SK-N-SH (cell line): ENCODE measurements at regions of chr1 and their contacts with region 1.

Region 1: DNA sequence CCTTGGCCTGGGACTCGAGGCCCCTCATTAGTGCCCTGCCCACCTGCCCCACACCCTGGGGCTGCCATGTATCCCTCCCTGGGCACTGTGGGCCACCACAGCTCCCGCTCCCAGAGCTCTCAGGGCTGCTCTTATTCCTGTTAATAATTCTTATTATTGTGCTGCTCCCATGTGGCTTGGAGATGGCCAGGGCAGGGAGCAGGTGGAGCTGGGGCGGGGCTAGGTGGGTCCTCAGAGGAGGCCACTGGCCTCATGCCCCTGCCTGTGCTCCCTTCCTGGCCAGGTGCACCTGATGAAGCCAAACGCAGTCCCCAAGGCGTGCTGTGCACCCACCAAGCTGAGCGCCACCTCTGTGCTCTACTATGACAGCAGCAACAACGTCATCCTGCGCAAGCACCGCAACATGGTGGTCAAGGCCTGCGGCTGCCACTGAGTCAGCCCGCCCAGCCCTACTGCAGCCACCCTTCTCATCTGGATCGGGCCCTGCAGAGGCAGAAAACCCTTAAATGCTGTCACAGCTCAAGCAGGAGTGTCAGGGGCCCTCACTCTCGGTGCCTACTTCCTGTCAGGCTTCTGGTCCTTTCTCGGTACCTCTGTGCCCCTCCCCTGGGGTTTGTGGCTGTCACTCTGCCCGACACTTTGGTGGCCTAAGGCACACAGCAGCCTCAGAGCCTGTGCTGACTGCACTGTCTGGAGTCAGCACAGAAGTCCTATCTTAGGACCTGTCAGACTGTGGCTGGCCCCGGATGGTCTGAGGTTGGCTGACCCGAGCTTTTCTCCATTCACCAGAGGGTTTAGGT is 34.1 kb downstream of the BMP8A start:
- DNase-seq: no peak
- H3K4me3 ChIP-seq: no peak overlapping the region
- H3K27ac ChIP-seq: no peak overlapping the region
- H3K4me1 ChIP-seq: no peaks in the 10 kb centered on the region
- H3K27me3 ChIP-seq: no peaks in the 10 kb centered on the region
- CTCF ChIP-seq: no peak
- EP300 ChIP-seq: no peak
- RAD21 ChIP-seq: no peak

Region 2: GRCh38 chr1:39387452-39387851 is 138.1 kb before region 1 on chr1:
- CTCF ChIA-PET with region 1: no interaction called
- POLR2A ChIA-PET with region 1: no interaction called
- DNase-seq: no peak
- H3K4me3 ChIP-seq: no peak overlapping the region
- H3K27ac ChIP-seq: peak overlapping the region; percentile 20 to 68; a peak in 2 of 4 replicates
- H3K4me1 ChIP-seq: peaks cover 8 to 29% of the 10 kb centered on the region in 2 experiments
- H3K27me3 ChIP-seq: no peaks in the 10 kb centered on the region
- CTCF ChIP-seq: peak; percentile 63
- EP300 ChIP-seq: peak in 1 of 2 experiments; percentile 15; a peak in 1 of 4 replicates
- RAD21 ChIP-seq: peak; percentile 41

Region 3: GRCh38 chr1:39422614-39423013 is 103.0 kb before region 1 on chr1:
- CTCF ChIA-PET with region 1: no interaction called
- POLR2A ChIA-PET with region 1: no interaction called
- DNase-seq: peak; percentile 9
- H3K4me3 ChIP-seq: no peak overlapping the region
- H3K27ac ChIP-seq: no peak overlapping the region
- H3K4me1 ChIP-seq: no peaks in the 10 kb centered on the region; a peak in 2 of 4 replicates
- H3K27me3 ChIP-seq: no peaks in the 10 kb centered on the region
- CTCF ChIP-seq: no peak
- EP300 ChIP-seq: no peak
- RAD21 ChIP-seq: no peak

Region 4: GRCh38 chr1:39538588-39539465 is 13.3 kb after region 1 on chr1:
- CTCF ChIA-PET with region 1: interaction called, 29 read pairs
- POLR2A ChIA-PET with region 1: no interaction called
- DNase-seq: peak; percentile 85
- H3K4me3 ChIP-seq: no peak overlapping the region; a peak in 1 of 4 replicates
- H3K27ac ChIP-seq: no peak overlapping the region
- H3K4me1 ChIP-seq: no peaks in the 10 kb centered on the region; a peak in 1 of 4 replicates
- H3K27me3 ChIP-seq: no peaks in the 10 kb centered on the region
- CTCF ChIP-seq: peak; percentile 95
- EP300 ChIP-seq: no peak
- RAD21 ChIP-seq: peak; percentile 90